ENCODE measurements at regions of chr3 and their contacts with region 1.

Region 1: DNA sequence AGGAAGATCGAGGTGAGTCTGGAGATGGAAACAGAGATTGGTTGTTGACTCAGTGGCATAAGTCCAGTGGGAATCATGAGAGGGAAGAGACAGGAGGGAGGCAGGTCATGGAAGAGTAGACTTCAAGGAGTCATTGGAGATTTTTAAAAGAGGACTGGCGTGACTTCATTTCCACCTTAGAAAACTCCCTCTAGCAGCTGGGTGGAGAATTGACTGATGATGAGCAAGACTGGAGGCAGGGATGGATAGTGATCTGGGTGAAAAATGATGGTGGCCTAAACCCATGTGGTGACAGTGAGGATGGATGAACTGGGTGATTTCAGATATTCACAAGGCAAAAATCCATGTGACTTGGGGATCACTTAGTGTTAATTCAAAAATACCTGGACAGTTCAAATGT is 23.1 kb upstream of the CPNE4 start:
- DNase-seq: no peak
- ATAC-seq: no peak
- H3K4me3 ChIP-seq: no peak overlapping the region
- H3K27ac ChIP-seq: no peak overlapping the region
- H3K4me1 ChIP-seq: no peaks in the 10 kb centered on the region
- H3K27me3 ChIP-seq: peaks cover 4% of the 10 kb centered on the region

Region 2: DNA sequence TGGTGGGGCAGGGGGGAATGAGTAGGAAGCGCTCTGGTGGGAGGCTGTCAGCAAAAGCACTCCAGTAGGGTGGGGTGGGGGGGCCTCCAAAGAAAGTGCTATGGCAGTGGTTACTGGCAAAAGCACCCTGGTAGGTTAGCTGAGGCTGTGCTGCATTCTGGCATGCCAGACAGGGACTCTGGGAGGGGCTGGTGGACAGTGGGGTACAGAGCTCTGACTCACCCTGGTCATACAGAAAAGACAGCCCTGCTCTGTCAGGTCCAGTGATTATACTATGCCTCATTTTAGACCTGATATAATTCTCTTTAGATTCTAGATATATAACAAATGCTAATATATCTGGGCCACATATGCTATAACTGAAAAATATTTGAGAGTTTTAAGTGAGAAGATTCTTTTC is 59.7 kb after region 1 on chr3:
- intact Hi-C with region 1: loop called in 1 of 4 experiments (anchors 10 kb)
- DNase-seq: no peak
- ATAC-seq: no peak
- H3K4me3 ChIP-seq: no peak overlapping the region
- H3K27ac ChIP-seq: no peak overlapping the region
- H3K4me1 ChIP-seq: no peaks in the 10 kb centered on the region
- H3K27me3 ChIP-seq: no peaks in the 10 kb centered on the region